Activated CD4-positive, alpha-beta memory T cell treated with anti-CD3 and anti-CD28 coated beads for 36 hours (primary cell): ENCODE measurements at regions of chrX and their contacts with region 1.

Region 1: GRCh38 chrX:79133904-79134303 is 10.6 kb upstream of the GPR174 start:
- DNase-seq: peak; percentile 28
- H3K4me3 Mint-ChIP-seq: peak overlapping the region; percentile 32
- H3K27ac Mint-ChIP-seq: peak overlapping the region; percentile 66
- H3K4me1 Mint-ChIP-seq: peaks cover 28% of the 10 kb centered on the region
- H3K27me3 Mint-ChIP-seq: no peaks in the 10 kb centered on the region

Region 2: GRCh38 chrX:79117078-79117477 is 16.8 kb before region 1 on chrX:
- CTCF ChIA-PET with region 1: no interaction called
- POLR2A ChIA-PET with region 1: no interaction called
- intact Hi-C with region 1: loop called (anchors 2 kb)
- DNase-seq: no peak
- H3K4me3 Mint-ChIP-seq: no peak overlapping the region
- H3K27ac Mint-ChIP-seq: no peak overlapping the region
- H3K4me1 Mint-ChIP-seq: peaks cover 38% of the 10 kb centered on the region
- H3K27me3 Mint-ChIP-seq: no peaks in the 10 kb centered on the region